ENCODE measurements at regions of chr19 and their contacts with region 1.

Region 1: GRCh38 chr19:3762501-3763459 is at the start of gene MRPL54:
- DNase-seq: peak; percentile 97 to 100
- H3K4me3 ChIP-seq: peak within 1 kb of the TSS; percentile 88 to 95
- H3K27ac ChIP-seq: peak within 1 kb of the TSS; percentile 87 to 98
- H3K4me1 ChIP-seq: peaks cover 9 to 22% of the 10 kb centered on the region in 2 donors
- H3K27me3 ChIP-seq: no peaks in the 10 kb centered on the region
- CTCF ChIP-seq: no peak
- total RNA-seq, gene MRPL54: 34.9 TPM

Region 2: GRCh38 chr19:3970808-3971598 is 208.2 kb after region 1 on chr19 and contains the start of gene DAPK3:
- intact Hi-C with region 1: loop called (anchors 1 kb)
- DNase-seq: peak; percentile 89 to 98
- H3K4me3 ChIP-seq: peak within 1 kb of the TSS; percentile 78 to 98
- H3K27ac ChIP-seq: peak within 1 kb of the TSS; percentile 99 to 100
- H3K4me1 ChIP-seq: peaks cover 28 to 33% of the 10 kb centered on the region in 2 donors
- H3K27me3 ChIP-seq: no peaks in the 10 kb centered on the region
- CTCF ChIP-seq: no peak
- total RNA-seq, gene DAPK3: 135 TPM

Region 3: GRCh38 chr19:4007021-4007835 is 244.4 kb after region 1 on chr19 and contains the start of gene PIAS4:
- intact Hi-C with region 1: loop called (anchors 2 kb)
- DNase-seq: peak; percentile 86 to 97
- H3K4me3 ChIP-seq: peak within 1 kb of the TSS; percentile 95 to 96
- H3K27ac ChIP-seq: peak within 1 kb of the TSS; percentile 66 to 67
- H3K4me1 ChIP-seq: peaks cover 5 to 29% of the 10 kb centered on the region in 2 donors
- H3K27me3 ChIP-seq: no peaks in the 10 kb centered on the region
- CTCF ChIP-seq: peak in 1 of 3 experiments; percentile 19
- total RNA-seq, gene PIAS4: 30.8 TPM

Region 4: GRCh38 chr19:4123615-4124568 is 361.1 kb after region 1 on chr19 and contains the start of gene MAP2K2:
- intact Hi-C with region 1: loop called (anchors 1 kb)
- DNase-seq: peak; percentile 59 to 95
- H3K4me3 ChIP-seq: peak within 1 kb of the TSS; percentile 85 to 99
- H3K27ac ChIP-seq: peak within 1 kb of the TSS; percentile 52 to 63
- H3K4me1 ChIP-seq: peaks cover 12 to 16% of the 10 kb centered on the region in 2 donors
- H3K27me3 ChIP-seq: no peaks in the 10 kb centered on the region
- CTCF ChIP-seq: peak in 1 of 3 experiments; percentile 19
- total RNA-seq, gene MAP2K2: 155 TPM

Region 5: GRCh38 chr19:4968462-4969291 is 1205.9 kb after region 1 on chr19 and contains the start of gene KDM4B:
- intact Hi-C with region 1: loop called (anchors 5 kb)
- DNase-seq: peak; percentile 99 to 100
- H3K4me3 ChIP-seq: peak within 1 kb of the TSS; percentile 62 to 90
- H3K27ac ChIP-seq: peak within 1 kb of the TSS; percentile 24 to 40
- H3K4me1 ChIP-seq: peaks cover 9 to 18% of the 10 kb centered on the region in 2 donors
- H3K27me3 ChIP-seq: no peaks in the 10 kb centered on the region
- CTCF ChIP-seq: no peak
- total RNA-seq, gene KDM4B: 46.0 TPM

Measured in ascending aorta (tissue), 2 donors.